Common myeloid progenitor, CD34-positive (primary cell): ENCODE measurements at regions of chr1 and their contacts with region 1.

Region 1: DNA sequence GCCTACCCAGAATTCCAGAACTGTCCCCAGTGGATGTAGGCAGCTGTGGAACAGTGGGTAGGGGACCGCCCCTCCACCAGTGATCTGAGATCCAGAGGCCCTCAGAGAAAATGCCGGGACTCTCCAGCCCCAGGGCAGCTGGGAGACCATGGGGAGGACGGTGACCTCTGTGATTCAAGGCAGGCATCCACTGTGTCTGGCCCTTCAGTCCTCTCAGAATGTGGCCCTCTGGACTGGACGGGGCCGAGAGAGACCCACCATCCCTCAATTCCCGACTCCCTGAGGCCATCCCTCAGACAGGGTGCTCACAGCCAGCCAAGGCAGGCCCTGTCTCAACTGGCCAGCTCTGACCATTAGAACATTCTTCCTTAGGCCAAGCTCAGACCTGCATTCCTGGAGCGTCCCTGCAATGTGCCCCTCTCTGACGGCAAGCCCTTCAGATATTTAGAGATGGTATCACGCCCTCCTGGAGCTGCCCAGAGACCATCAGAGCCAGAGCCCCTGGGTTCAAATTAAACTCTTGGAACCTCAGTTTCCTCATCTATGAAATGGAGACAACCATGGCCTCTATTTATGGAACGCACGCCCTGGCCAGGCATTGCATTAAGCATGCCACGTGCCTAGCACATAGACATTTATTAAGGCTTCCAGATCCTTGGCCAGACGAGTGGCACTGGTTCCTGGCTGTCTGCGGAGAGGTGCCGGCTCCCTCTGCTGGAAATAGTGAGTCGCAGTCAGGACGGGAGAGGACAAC is 9.6 kb upstream of the EPS8L3 start:
- DNase-seq: peak; percentile 81 to 91 (median 90)
- H3K4me3 ChIP-seq: no peak overlapping the region
- H3K27ac ChIP-seq: no peak overlapping the region
- H3K4me1 ChIP-seq: peaks cover 0 to 9% (median 5%) of the 10 kb centered on the region in 4 experiments
- H3K27me3 ChIP-seq: no peaks in the 10 kb centered on the region

Region 2: DNA sequence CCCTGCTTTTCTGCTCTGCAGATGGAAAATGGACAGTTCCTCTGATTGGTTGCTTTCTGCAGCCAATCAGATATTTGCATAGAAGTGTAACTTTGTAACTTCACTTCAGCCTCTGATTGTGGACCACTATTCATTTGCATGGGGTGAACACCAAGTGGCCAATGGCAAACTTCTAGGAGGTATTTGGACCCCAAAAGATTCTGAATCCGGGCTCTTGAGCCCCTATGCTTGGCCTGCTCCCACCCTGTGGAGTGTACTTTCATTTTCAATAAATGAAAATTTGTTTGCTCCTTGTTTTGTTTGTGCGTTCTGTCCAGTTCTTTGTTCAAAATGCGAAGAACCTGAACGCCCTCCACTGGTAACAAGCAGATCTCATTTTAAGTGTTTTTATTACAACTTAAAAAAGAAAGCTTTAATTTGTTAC is 123.8 kb before region 1 on chr1:
- CTCF ChIA-PET with region 1: interaction called, 320 read pairs
- POLR2A ChIA-PET with region 1: no interaction called
- DNase-seq: peak; percentile 48 to 80 (median 70)
- H3K4me3 ChIP-seq: peak overlapping the region in 3 of 7 experiments; percentile 34 to 68 (median 38)
- H3K27ac ChIP-seq: no peak overlapping the region
- H3K4me1 ChIP-seq: peaks cover 0 to 6% (median 0%) of the 10 kb centered on the region in 4 experiments
- H3K27me3 ChIP-seq: peaks cover 0 to 2% (median 0%) of the 10 kb centered on the region in 5 experiments

Region 3: DNA sequence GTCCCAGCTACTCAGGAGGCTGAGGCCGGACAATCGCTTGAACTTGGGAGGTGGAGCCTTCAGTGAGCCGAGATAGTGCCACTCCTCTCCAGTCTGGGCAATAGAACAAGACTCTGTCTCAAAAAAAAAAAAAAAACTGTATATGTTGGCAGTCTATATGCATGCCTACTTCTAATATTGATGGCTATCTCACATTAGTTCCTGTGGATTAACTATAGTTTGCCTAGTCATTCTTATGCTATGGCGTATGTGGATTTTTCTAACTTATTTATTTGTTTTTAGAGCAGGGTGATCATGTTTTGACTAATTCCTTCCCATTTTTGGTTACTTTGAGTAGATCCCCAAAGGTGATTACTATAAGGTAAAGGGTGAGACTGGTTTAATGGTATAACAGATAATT is 76.2 kb before region 1 on chr1:
- CTCF ChIA-PET with region 1: no interaction called
- POLR2A ChIA-PET with region 1: no interaction called
- DNase-seq: no peak
- H3K4me3 ChIP-seq: no peak overlapping the region
- H3K27ac ChIP-seq: no peak overlapping the region
- H3K4me1 ChIP-seq: no peaks in the 10 kb centered on the region
- H3K27me3 ChIP-seq: no peaks in the 10 kb centered on the region

Region 4: GRCh38 chr1:109762821-109763645 is 10.3 kb before region 1 on chr1:
- CTCF ChIA-PET with region 1: interaction called, 17 read pairs
- POLR2A ChIA-PET with region 1: no interaction called
- DNase-seq: peak in 2 of 3 donors; percentile 53 to 64
- H3K4me3 ChIP-seq: peak overlapping the region in 1 of 7 experiments; percentile 21
- H3K27ac ChIP-seq: peak overlapping the region in 1 of 2 experiments; percentile 57
- H3K4me1 ChIP-seq: peaks cover 5 to 33% (median 16%) of the 10 kb centered on the region in 4 experiments
- H3K27me3 ChIP-seq: no peaks in the 10 kb centered on the region

Region 5: GRCh38 chr1:109807822-109808680 is 34.7 kb after region 1 on chr1:
- CTCF ChIA-PET with region 1: interaction called, 14 read pairs
- POLR2A ChIA-PET with region 1: no interaction called
- DNase-seq: no peak
- H3K4me3 ChIP-seq: no peak overlapping the region
- H3K27ac ChIP-seq: no peak overlapping the region
- H3K4me1 ChIP-seq: peaks cover 2 to 48% (median 20%) of the 10 kb centered on the region in 4 experiments
- H3K27me3 ChIP-seq: no peaks in the 10 kb centered on the region

Region 6: DNA sequence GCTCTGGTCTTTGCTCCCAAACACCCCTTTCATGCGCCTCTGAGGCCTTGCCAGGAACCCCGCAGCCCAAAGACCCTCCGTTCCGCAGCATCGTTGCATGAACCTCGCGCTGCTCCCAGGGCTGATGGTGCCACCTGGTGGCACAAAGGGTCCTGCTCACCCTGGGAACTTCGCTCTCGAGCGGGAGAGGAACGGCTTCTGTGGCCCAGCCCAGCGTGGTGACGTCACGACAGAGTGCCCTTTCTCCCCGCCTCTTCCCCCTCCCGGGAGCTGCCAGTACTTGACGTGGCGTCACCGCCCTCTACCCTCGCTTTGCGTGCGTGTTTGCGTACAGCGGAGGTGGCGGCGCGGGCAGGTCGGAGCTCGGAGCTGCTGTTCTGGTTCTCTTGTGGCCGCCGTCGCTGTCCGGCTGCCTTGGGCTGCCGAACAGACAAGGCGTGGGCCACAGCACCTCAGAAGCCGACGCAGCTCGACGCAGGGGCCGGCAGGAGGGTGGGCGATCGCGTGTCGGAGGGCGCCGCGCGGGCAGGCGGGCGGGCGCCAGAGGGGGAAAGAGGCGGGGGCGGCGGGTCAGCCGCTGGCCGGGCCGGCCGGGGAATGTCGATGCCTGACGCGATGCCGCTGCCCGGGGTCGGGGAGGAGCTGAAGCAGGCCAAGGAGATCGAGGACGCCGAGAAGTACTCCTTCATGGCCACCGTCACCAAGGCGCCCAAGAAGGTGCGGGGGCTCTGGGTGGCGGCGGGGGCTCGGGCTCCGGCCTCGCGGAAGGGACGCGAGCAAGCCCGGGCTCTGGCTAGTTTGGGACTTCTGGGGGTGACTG is 211.3 kb after region 1 on chr1 and contains the start of gene AHCYL1:
- CTCF ChIA-PET with region 1: interaction called, 551 read pairs
- POLR2A ChIA-PET with region 1: interaction called, 10 read pairs
- DNase-seq: peak; percentile 98 to 99 (median 98)
- H3K4me3 ChIP-seq: peak within 1 kb of the TSS; percentile 76 to 90 (median 81)
- H3K27ac ChIP-seq: peak within 1 kb of the TSS; percentile 84 to 91
- H3K4me1 ChIP-seq: peaks cover 9 to 33% (median 17%) of the 10 kb centered on the region in 4 experiments
- H3K27me3 ChIP-seq: no peaks in the 10 kb centered on the region

Region 7: GRCh38 chr1:110011527-110012041 is 238.3 kb after region 1 on chr1:
- CTCF ChIA-PET with region 1: interaction called, 45 read pairs
- POLR2A ChIA-PET with region 1: interaction called, 4 read pairs
- DNase-seq: peak; percentile 65 to 82 (median 78)
- H3K4me3 ChIP-seq: no peak overlapping the region
- H3K27ac ChIP-seq: no peak overlapping the region
- H3K4me1 ChIP-seq: no peaks in the 10 kb centered on the region
- H3K27me3 ChIP-seq: no peaks in the 10 kb centered on the region